HEK293 (cell line): ENCODE measurements at regions of chr17 and their contacts with region 1.

Region 1: DNA sequence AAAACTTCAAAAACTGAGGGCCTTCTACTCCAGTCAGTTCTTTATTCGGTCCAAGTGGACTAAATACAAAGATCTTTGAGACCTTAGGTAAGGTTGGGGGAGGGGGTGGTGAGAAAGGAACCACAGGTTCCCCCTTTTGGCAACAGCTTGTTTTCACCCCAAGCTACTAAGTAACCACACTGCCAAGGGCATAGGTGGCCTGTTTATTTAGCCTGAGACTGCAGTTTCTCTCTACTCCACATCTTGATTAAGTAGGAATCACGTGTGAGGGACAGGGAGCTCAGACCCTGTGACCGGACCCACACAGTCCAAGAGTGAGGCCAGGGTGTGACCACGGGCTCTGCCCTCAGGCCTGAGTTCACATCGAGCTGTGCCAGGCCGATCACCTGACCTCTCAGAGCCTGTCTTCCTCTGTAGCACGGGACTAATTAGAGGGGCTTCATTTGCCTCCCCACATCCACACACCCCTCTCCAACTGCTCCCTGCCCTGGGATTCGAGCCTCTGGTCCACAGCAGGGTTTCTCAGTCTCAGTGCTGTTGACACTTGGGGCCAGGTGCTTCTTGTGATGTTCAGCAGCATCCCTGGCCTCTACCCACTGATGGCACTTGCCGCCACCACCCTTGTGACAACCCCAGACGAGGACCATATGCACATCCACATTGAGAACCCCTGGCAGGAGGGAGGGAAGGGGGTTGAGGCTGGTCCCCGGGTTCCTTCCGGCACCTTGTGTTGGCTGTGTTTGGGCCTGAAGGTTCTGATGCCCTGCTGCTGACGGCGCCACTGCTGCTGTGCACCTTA is 17.8 kb downstream of the ST6GALNAC2 start:
- H3K4me3 ChIP-seq: no peak overlapping the region
- H3K27ac ChIP-seq: 0 out of 2 replicates have a peak overlapping the region, but pooled peaks have one; percentile 5
- H3K4me1 ChIP-seq: no peaks in the 10 kb centered on the region
- CTCF ChIP-seq: no peak

Region 2: DNA sequence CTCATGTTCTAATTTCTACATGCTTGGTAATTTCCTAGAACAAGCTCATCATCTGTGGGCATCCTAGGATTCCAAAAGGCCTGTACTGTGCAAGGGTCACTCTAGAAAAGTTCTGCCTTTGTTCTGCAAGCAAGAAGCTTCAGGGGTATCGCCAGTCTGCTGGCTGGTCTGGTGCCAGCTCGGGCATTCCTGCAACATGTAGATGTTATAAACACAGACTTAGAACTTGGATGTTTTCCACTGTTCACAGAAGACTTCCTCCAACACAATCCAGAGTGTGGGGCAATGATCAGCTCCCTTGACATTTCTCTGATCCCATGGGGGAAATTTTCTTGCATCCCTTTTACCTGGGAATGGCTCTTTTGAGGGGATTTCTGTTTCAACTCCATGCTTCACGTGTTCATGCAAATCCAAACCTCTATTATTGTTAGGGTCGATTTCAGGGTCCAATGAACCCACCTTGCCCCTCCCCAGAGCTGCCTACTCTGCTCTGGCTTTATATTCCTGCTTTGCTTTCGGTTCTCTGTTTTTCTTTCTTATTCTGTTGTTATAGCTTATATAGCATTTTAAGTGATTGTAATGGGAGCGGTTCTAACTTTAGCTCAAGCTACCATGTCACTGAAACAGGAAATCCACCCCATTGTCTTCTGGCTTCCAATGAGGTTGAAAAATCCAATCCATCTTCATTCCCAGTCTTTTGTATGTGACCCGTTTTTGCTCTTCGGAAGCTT is 140.2 kb before region 1 on chr17:
- CTCF ChIA-PET with region 1: no interaction called
- POLR2A ChIA-PET with region 1: no interaction called
- H3K4me3 ChIP-seq: no peak overlapping the region
- H3K27ac ChIP-seq: no peak overlapping the region
- H3K4me1 ChIP-seq: no peaks in the 10 kb centered on the region
- CTCF ChIP-seq: no peak

Region 3: DNA sequence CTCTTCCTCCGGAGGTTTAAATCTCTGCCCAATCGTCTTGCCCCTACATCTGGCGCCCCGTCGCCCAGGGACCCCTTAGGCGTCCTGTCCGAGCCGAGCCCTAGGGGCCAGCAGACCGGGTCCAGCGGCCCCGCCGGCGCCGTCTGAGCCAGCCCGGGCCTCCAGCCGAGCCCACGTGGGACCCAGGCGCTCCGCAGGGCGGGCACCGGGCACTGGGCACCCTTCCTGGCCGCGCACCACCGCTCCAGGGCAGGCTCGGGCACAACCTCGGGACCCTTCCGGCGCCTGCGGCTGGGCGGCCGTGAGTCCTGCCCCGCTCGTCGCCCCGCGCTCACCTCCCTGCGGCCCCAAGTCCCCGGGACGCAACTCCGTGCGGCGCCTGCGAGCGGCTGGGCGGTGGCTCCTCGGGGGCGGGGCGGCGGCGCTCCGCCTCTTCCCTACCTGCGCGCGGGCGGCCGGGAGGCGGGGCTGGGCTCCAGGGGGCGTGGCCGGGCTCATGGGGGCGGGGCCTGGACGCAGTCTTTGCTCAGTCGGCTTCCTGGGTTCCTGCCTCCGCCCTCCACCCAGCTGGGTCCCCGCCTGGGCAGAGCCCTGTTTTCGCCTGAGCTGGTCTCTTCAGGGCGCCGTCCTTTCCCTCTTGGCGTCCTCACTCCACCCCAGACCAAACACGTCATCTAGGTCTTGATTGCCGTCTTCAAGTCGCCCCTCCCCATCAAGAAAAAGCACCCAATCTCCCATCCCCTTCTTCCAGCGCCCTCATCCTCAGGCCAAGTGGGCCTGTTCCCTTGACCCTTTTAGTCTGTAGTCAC is 66.6 kb before region 1 on chr17 and contains the start of gene RHBDF2:
- CTCF ChIA-PET with region 1: no interaction called
- POLR2A ChIA-PET with region 1: no interaction called
- H3K4me3 ChIP-seq: peak within 1 kb of the TSS; percentile 66
- H3K27ac ChIP-seq: peak within 1 kb of the TSS; percentile 39; the same call in 1 of the 2 replicates
- H3K4me1 ChIP-seq: peaks cover 16% of the 10 kb centered on the region
- CTCF ChIP-seq: no peak

Region 4: DNA sequence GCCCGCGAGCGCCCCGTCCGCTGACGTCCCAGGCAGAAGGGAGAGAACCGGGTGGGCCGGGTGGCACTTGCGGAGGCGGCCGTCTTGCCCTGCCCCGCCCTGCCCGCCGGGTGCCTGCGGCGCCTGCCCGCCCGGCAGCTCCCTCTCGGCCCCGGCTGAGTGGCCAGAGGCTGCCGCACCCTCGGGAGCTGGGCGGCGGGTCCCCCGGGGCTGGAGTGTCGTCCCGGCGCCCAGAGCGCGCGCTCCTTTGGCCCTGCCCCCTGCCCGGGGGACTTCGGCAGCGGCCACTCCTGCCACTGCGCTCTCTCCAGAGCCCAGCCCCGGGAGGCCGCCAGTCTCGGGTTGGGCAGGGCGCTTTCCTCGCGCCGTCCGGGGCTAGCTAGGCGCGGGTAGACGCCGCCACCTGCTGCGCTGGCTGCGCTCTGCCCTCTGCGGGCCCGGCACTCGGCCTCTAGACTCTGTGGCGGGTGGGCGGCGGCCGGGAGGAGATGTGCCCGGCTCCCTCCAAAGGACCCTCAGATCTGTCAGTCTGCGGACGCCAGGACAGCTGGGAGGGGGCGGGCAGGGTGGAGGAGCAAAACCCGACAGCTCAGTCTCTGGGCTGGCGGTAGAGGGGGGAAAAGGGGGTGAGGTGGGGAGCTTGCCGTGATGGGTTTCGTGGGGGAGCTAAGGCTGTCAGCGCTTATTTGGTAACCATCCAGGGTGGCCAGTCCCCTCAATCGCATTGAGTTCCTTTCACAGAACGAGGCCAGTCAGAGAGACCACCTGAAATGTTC is 18.2 kb after region 1 on chr17 and contains the start of gene ST6GALNAC2:
- CTCF ChIA-PET with region 1: interaction called, 5 read pairs
- POLR2A ChIA-PET with region 1: interaction called, 12 read pairs
- H3K4me3 ChIP-seq: peak within 1 kb of the TSS; percentile 48
- H3K27ac ChIP-seq: peak within 1 kb of the TSS; percentile 71
- H3K4me1 ChIP-seq: peaks cover 3% of the 10 kb centered on the region; the same call in 1 of the 2 replicates
- CTCF ChIP-seq: peak; percentile 70